ENCODE measurements at regions of chr1 and their contacts with region 1.

Region 1: GRCh38 chr1:201376464-201377374 is 761 bp downstream of the TNNT2 start:
- DNase-seq: no peak

Region 2: GRCh38 chr1:201320163-201320788 is 56.4 kb before region 1 on chr1:
- intact Hi-C with region 1: no loop called
- DNase-seq: peak; percentile 38

Region 3: GRCh38 chr1:201460814-201461657 is 84.3 kb after region 1 on chr1:
- intact Hi-C with region 1: loop called (anchors 5 kb)
- DNase-seq: no peak

Measured in cardiac septum (tissue), 1 donor.